MCF 10A (cell line): ENCODE measurements at regions of chr3 and their contacts with region 1.

Region 1: GRCh38 chr3:25843332-25843731 is 53.4 kb downstream of the OXSM start:
- DNase-seq: peak; percentile 14
- H3K4me3 Mint-ChIP-seq: no peak overlapping the region
- H3K27ac Mint-ChIP-seq: no peak overlapping the region
- H3K4me1 Mint-ChIP-seq: no peaks in the 10 kb centered on the region
- H3K27me3 Mint-ChIP-seq: no peaks in the 10 kb centered on the region
- CTCF ChIP-seq: peak; percentile 42

Region 2: DNA sequence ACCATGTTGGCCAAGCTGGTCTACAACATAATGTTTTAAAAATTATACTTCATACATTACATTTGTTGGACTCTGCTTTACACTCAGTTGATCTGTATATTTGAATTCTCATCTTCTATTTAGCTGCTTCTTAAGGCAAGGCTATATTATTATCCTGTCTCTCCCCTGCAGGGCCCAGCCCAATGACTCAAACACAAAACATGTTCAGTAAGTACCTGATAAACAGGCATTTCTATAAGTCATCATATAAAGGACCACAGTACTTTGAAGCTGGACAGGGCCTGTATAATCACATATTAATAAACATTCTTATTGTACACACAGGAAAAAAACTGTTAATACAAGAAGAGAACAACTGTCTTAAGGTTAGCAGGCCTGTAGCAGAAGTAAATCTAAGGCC is 96.3 kb before region 1 on chr3:
- CTCF ChIA-PET with region 1: no interaction called
- POLR2A ChIA-PET with region 1: no interaction called
- intact Hi-C with region 1: no loop called
- DNase-seq: peak; percentile 2
- H3K4me3 Mint-ChIP-seq: no peak overlapping the region
- H3K27ac Mint-ChIP-seq: peak overlapping the region; percentile 36
- H3K4me1 Mint-ChIP-seq: no peaks in the 10 kb centered on the region
- H3K27me3 Mint-ChIP-seq: no peaks in the 10 kb centered on the region
- CTCF ChIP-seq: no peak

Region 3: DNA sequence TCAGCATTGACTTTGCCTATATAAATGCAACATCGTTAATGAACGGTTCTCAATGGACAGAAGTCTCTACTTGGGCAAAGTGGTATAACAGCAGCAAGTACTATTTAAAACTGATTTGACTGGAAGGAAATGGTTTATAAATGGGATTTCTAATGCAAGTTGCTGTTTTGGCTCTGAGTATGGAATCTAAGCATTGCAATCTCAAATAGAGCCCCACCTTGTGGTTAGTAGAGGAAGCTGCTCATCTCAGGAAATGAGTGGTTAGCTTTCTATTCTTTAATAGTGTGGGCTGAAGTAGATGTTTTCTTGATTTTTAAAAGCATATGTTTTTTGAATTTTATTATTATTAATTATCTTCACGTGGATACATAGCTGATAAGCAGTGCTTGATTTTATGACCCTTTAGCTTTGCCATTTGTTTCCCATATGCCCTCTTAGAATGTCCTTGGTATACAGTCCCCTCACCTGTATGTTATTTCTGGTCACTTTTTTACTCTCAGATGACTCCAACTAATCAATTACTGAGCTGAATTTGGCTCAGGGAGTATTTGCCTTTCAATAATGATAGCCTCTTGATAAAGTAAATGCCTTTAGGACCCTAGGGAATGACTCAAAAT is 13.7 kb after region 1 on chr3:
- CTCF ChIA-PET with region 1: interaction called, 13 read pairs
- POLR2A ChIA-PET with region 1: interaction called, 3 read pairs
- intact Hi-C with region 1: no loop called
- DNase-seq: peak; percentile 49
- H3K4me3 Mint-ChIP-seq: no peak overlapping the region
- H3K27ac Mint-ChIP-seq: no peak overlapping the region
- H3K4me1 Mint-ChIP-seq: peaks cover 9% of the 10 kb centered on the region
- H3K27me3 Mint-ChIP-seq: no peaks in the 10 kb centered on the region
- CTCF ChIP-seq: peak; percentile 59

Region 4: DNA sequence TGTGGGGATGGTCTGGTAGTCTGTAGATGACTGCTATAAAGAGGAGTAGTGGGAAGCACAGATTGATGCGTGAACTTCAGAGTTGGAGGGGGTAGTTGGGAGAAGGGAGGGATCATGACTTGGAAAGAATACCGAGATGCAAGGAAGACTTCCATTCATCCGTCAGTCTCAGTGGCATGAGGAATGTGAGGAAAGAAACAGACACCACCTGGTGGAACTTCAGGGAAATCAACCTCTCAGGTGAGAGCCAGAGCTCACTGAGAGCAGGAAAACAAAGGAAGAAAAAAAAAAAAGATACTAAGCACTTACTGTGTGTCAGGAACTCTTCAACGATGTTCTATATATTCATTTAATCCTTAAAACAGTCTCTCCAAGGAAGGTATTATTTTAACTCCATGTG is 118.9 kb after region 1 on chr3:
- CTCF ChIA-PET with region 1: interaction called, 5 read pairs
- POLR2A ChIA-PET with region 1: no interaction called
- intact Hi-C with region 1: loop called (anchors 5 kb)
- DNase-seq: peak; percentile 45
- H3K4me3 Mint-ChIP-seq: no peak overlapping the region
- H3K27ac Mint-ChIP-seq: no peak overlapping the region
- H3K4me1 Mint-ChIP-seq: no peaks in the 10 kb centered on the region
- H3K27me3 Mint-ChIP-seq: no peaks in the 10 kb centered on the region
- CTCF ChIP-seq: peak; percentile 48

Region 5: GRCh38 chr3:26712211-26713026 is 869.1 kb after region 1 on chr3:
- CTCF ChIA-PET with region 1: interaction called, 9 read pairs
- POLR2A ChIA-PET with region 1: no interaction called
- intact Hi-C with region 1: loop called (anchors 1 kb)
- DNase-seq: peak; percentile 50
- H3K4me3 Mint-ChIP-seq: no peak overlapping the region
- H3K27ac Mint-ChIP-seq: no peak overlapping the region
- H3K4me1 Mint-ChIP-seq: no peaks in the 10 kb centered on the region
- H3K27me3 Mint-ChIP-seq: no peaks in the 10 kb centered on the region
- CTCF ChIP-seq: peak; percentile 56